K562 (cell line): ENCODE measurements at regions of chr3 and their contacts with region 1.

Region 1: DNA sequence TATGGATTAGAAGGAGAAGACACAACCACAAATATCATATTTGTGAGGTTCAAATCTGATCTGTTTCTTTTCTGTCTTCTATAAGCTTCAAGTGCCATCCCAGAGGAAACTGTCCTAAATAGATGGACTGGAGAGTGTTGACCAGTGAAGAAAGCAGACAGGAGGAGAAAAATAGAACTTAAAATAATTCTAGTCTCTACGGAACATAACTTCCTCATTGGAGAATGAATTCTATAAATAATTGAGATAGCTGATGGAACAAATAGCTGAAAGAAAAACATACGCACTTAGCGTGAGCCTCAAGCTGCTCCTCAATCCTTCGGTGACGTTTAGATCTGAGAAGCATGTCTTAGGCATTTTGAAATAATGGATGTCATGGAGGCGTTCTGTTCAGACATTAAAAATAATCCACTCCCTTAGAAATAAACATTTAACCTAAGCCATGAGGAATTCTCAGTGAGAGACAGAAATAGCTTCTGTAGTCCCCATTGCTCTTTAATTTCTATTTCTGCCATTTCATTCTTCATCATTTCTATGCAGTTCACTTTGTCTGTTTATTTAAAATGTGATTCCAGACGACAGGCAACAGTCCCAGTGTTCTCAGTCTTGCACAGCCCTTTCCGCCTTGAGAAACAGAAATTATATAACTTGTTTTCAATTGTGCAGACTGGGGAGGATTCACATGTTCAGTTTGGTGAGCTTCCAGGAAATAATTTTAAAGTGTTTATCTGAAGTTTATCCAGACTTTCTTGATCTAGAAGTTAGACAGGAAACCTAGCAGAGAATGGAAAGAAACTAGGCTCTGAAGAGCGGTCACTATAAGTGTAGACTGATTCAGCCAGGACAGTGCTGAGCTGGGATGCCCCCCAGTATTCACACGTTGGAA is 97.3 kb downstream of the NR1D2 start:
- DNase-seq: no peak
- ATAC-seq: no peak
- H3K4me3 ChIP-seq: no peak overlapping the region
- H3K27ac ChIP-seq: no peak overlapping the region
- H3K4me1 ChIP-seq: no peaks in the 10 kb centered on the region
- H3K27me3 ChIP-seq: peaks cover 0 to 3% of the 10 kb centered on the region in 2 experiments; a peak in 3 of 5 replicates
- CTCF ChIP-seq: no peak
- EP300 ChIP-seq: no peak
- POLR2A ChIP-seq: no peak
- RAD21 ChIP-seq: no peak

Region 2: GRCh38 chr3:23202921-23203707 is 839.3 kb before region 1 on chr3 and contains the start of gene UBE2E2:
- CTCF ChIA-PET with region 1: no interaction called
- POLR2A ChIA-PET with region 1: no interaction called
- in situ Hi-C with region 1: loop called (anchors 25 kb)
- intact Hi-C with region 1: no loop called
- DNase-seq: peak; percentile 76 to 97 (median 92)
- ATAC-seq: peak; percentile 86
- H3K4me3 ChIP-seq: peak within 1 kb of the TSS; percentile 70
- H3K27ac ChIP-seq: no peak within 1 kb of the TSS
- H3K4me1 ChIP-seq: peaks cover 4 to 17% of the 10 kb centered on the region in 2 experiments; a peak in 2 of 5 replicates
- H3K27me3 ChIP-seq: peaks cover 3 to 6% of the 10 kb centered on the region in 2 experiments
- CTCF ChIP-seq: no peak
- EP300 ChIP-seq: no peak
- POLR2A ChIP-seq: no peak
- RAD21 ChIP-seq: no peak
- polyA plus RNA-seq, gene UBE2E2: 0.22 to 0.25 TPM

Region 3: DNA sequence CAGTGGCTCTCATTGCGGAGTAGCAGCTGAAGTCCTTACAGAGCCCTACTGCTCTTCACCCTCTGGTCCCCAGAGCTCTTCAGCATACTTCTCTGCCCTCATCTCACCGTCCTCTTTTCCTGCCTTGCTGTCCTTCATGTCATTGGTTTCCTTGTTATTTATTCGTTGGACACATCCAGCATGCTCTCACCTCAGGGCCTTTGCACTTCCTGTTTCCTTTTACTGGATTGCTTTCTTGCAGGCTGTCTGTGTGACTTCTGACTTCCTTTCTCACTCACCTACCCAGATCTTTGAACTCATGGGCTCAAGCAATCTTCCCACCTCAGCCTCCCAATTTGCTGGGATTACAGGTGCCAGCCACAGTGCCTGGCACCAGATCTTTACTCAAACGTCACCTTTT is 29.8 kb after region 1 on chr3:
- CTCF ChIA-PET with region 1: no interaction called
- POLR2A ChIA-PET with region 1: no interaction called
- in situ Hi-C with region 1: no loop called
- intact Hi-C with region 1: no loop called
- DNase-seq: no peak
- ATAC-seq: no peak
- H3K4me3 ChIP-seq: no peak overlapping the region
- H3K27ac ChIP-seq: no peak overlapping the region
- H3K4me1 ChIP-seq: peaks cover 0 to 2% of the 10 kb centered on the region in 2 experiments; a peak in 1 of 5 replicates
- H3K27me3 ChIP-seq: no peaks in the 10 kb centered on the region
- CTCF ChIP-seq: no peak
- EP300 ChIP-seq: no peak
- POLR2A ChIP-seq: no peak
- RAD21 ChIP-seq: no peak